CD8-positive, alpha-beta T cell (primary cell): ENCODE measurements at regions of chr4 and their contacts with region 1.

Region 1: DNA sequence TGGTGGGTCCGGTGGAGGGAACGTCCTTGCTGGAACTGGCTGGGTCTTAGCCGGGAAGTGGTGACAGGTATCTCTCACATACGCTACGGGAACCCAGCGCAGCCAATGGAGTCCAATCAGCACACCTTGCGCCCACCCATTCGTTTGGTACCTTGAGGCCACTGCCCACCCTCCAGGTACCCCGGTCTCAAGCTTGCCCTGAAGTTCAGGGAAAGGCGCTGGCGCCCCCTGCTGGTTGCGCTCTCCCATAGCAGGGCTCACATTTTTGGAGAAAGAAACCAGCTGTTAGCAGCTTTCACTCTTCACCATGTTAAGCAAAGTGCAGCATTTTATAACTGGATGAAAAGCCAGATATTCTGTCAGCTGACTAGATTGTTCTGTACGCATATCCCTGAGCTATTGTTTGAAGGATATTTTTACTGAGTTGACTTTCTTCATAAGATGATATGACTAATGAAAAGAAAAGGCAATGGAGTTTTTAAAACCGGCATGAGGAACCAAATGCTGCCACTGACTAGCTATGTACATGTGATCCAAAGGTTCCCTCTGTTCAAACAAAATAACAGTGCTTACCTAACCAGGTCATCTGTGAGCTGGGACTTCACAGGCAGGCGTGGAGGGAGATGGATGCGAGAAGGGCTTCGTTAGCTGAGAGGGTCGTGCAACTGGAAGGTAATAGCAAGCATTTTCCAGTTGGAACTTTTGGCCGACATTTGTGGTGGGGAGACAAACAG is 43.7 kb downstream of the OTOP1 start:
- DNase-seq: peak in 3 of 9 experiments; percentile 13 to 29 (median 21)
- ATAC-seq: no peak
- H3K4me3 ChIP-seq: no peak overlapping the region
- H3K4me3 Mint-ChIP-seq: no peak overlapping the region
- H3K27ac ChIP-seq: no peak overlapping the region
- H3K27ac Mint-ChIP-seq: no peak overlapping the region
- H3K4me1 ChIP-seq: no peaks in the 10 kb centered on the region
- H3K4me1 Mint-ChIP-seq: no peaks in the 10 kb centered on the region
- H3K27me3 ChIP-seq: peaks cover 0 to 6% of the 10 kb centered on the region in 2 experiments
- H3K27me3 Mint-ChIP-seq: peaks cover 38% of the 10 kb centered on the region
- CTCF ChIP-seq: no peak

Region 2: GRCh38 chr4:3898098-3898497 is 284.9 kb before region 1 on chr4:
- CTCF ChIA-PET with region 1: no interaction called
- POLR2A ChIA-PET with region 1: no interaction called
- intact Hi-C with region 1: loop called in 1 of 2 experiments (anchors 5 kb)
- DNase-seq: no peak
- ATAC-seq: no peak
- H3K4me3 ChIP-seq: no peak overlapping the region
- H3K4me3 Mint-ChIP-seq: no peak overlapping the region
- H3K27ac ChIP-seq: no peak overlapping the region
- H3K27ac Mint-ChIP-seq: no peak overlapping the region
- H3K4me1 ChIP-seq: no peaks in the 10 kb centered on the region
- H3K4me1 Mint-ChIP-seq: no peaks in the 10 kb centered on the region
- H3K27me3 ChIP-seq: no peaks in the 10 kb centered on the region
- H3K27me3 Mint-ChIP-seq: peaks cover 11% of the 10 kb centered on the region
- CTCF ChIP-seq: no peak

Region 3: GRCh38 chr4:4334798-4335520 is 152.0 kb after region 1 on chr4:
- CTCF ChIA-PET with region 1: no interaction called
- POLR2A ChIA-PET with region 1: no interaction called
- intact Hi-C with region 1: no loop called
- DNase-seq: peak; percentile 55 to 88 (median 77)
- ATAC-seq: peak; percentile 100
- H3K4me3 ChIP-seq: no peak overlapping the region
- H3K4me3 Mint-ChIP-seq: peak overlapping the region; percentile 43
- H3K27ac ChIP-seq: no peak overlapping the region
- H3K27ac Mint-ChIP-seq: peak overlapping the region; percentile 49
- H3K4me1 ChIP-seq: peaks cover 6% of the 10 kb centered on the region
- H3K4me1 Mint-ChIP-seq: peaks cover 17% of the 10 kb centered on the region
- H3K27me3 ChIP-seq: no peaks in the 10 kb centered on the region
- H3K27me3 Mint-ChIP-seq: no peaks in the 10 kb centered on the region
- CTCF ChIP-seq: peak; percentile 65